ENCODE measurements at regions of chr1 and their contacts with region 1.

Region 1: DNA sequence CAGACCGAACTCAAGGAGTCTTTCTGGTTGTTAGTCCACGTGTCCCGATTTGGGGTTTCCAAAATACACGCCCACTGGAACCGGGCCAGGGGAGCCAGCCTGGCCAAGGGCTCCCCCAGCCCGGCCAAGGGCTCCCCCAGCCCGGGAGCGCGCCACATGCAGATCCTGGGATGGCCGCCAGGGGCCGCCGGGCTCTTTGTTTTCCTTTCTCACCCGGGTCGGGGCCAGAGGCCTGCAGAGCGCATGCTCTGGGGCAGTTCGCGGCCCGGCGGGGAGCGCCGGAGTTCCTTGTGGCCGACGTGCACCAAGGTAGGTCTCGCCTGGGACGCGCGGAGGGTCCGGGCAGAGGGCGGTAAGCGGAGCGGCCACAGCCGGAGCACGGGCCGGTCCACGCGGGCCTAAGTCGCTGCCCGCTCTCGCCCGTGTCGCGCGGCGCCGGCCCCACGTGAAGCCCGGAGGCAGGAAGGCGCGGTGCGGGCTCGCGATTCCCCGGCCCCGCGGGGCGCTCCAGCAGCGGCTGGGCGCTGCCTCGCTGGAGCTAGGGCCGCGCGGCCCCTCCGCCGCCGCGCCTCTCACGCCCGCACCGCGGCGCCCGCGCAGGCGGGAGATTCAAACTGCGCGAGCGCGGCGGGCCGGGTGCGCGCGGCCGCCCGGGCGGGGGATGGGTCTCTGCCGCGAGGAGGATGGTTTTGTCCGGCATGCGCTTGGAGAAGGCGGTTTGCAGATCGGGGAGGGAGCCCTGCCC is 12.3 kb downstream of the RCC1 start:
- DNase-seq: peak; percentile 84 to 87 (median 86)
- H3K4me3 ChIP-seq: peak overlapping the region; percentile 33 to 65
- H3K4me3 Mint-ChIP-seq: peak overlapping the region; percentile 85 to 92 (median 90)
- H3K27ac ChIP-seq: peak overlapping the region; percentile 56
- H3K27ac Mint-ChIP-seq: peak overlapping the region; percentile 67 to 94 (median 85)
- H3K4me1 ChIP-seq: peaks cover 27% of the 10 kb centered on the region
- H3K4me1 Mint-ChIP-seq: peaks cover 15 to 32% (median 21%) of the 10 kb centered on the region in 4 donors
- H3K27me3 ChIP-seq: no peaks in the 10 kb centered on the region
- H3K27me3 Mint-ChIP-seq: no peaks in the 10 kb centered on the region

Region 2: GRCh38 chr1:28456078-28456477 is 62.1 kb before region 1 on chr1:
- CTCF ChIA-PET with region 1: no interaction called
- POLR2A ChIA-PET with region 1: no interaction called
- intact Hi-C with region 1: no loop called
- DNase-seq: no peak
- H3K4me3 ChIP-seq: no peak overlapping the region
- H3K4me3 Mint-ChIP-seq: no peak overlapping the region
- H3K27ac ChIP-seq: no peak overlapping the region
- H3K27ac Mint-ChIP-seq: peak overlapping the region in 4 of 7 donors; percentile 0 to 69 (median 50)
- H3K4me1 ChIP-seq: peaks cover under 1% of the 10 kb centered on the region
- H3K4me1 Mint-ChIP-seq: peaks cover 4 to 10% (median 6%) of the 10 kb centered on the region in 4 donors
- H3K27me3 ChIP-seq: no peaks in the 10 kb centered on the region
- H3K27me3 Mint-ChIP-seq: no peaks in the 10 kb centered on the region

Region 3: GRCh38 chr1:28602536-28603439 is 84.6 kb after region 1 on chr1:
- CTCF ChIA-PET with region 1: interaction called, 7 read pairs
- POLR2A ChIA-PET with region 1: interaction called, 3 read pairs
- intact Hi-C with region 1: loop called (anchors 1 kb)
- DNase-seq: peak in 3 of 5 donors; percentile 13 to 28 (median 25)
- H3K4me3 ChIP-seq: no peak overlapping the region
- H3K4me3 Mint-ChIP-seq: no peak overlapping the region
- H3K27ac ChIP-seq: no peak overlapping the region
- H3K27ac Mint-ChIP-seq: peak overlapping the region in 2 of 7 donors; percentile 10 to 77
- H3K4me1 ChIP-seq: no peaks in the 10 kb centered on the region
- H3K4me1 Mint-ChIP-seq: peaks cover 0 to 2% (median 0%) of the 10 kb centered on the region in 4 donors
- H3K27me3 ChIP-seq: no peaks in the 10 kb centered on the region
- H3K27me3 Mint-ChIP-seq: no peaks in the 10 kb centered on the region

Region 4: GRCh38 chr1:28756846-28757245 is 238.7 kb after region 1 on chr1:
- CTCF ChIA-PET with region 1: interaction called, 3 read pairs
- POLR2A ChIA-PET with region 1: no interaction called
- intact Hi-C with region 1: loop called (anchors 2 kb)
- DNase-seq: peak in 2 of 5 donors; percentile 6 to 16
- H3K4me3 ChIP-seq: no peak overlapping the region
- H3K4me3 Mint-ChIP-seq: peak overlapping the region in 1 of 8 donors; percentile 52
- H3K27ac ChIP-seq: no peak overlapping the region
- H3K27ac Mint-ChIP-seq: peak overlapping the region in 2 of 7 donors; percentile 57
- H3K4me1 ChIP-seq: peaks cover 63% of the 10 kb centered on the region
- H3K4me1 Mint-ChIP-seq: peaks cover 21 to 36% (median 30%) of the 10 kb centered on the region in 4 donors
- H3K27me3 ChIP-seq: no peaks in the 10 kb centered on the region
- H3K27me3 Mint-ChIP-seq: no peaks in the 10 kb centered on the region

Measured in CD4-positive, alpha-beta memory T cell (primary cell).